ENCODE measurements at regions of chr4 and their contacts with region 1.

Region 1: GRCh38 chr4:121777625-121778024 is 12.7 kb upstream of the SMIM43 start:
- DNase-seq: no peak
- H3K4me3 ChIP-seq: no peak overlapping the region
- H3K27ac ChIP-seq: no peak overlapping the region
- H3K4me1 ChIP-seq: peaks cover 0 to 2% (median 0%) of the 10 kb centered on the region in 4 experiments; a peak in 1 of 7 replicates
- H3K27me3 ChIP-seq: peaks cover 0 to 2% (median 0%) of the 10 kb centered on the region in 4 experiments; a peak in 1 of 7 replicates
- CTCF ChIP-seq: no peak
- EP300 ChIP-seq: no peak
- POLR2A ChIP-seq: no peak
- RAD21 ChIP-seq: no peak

Region 2: DNA sequence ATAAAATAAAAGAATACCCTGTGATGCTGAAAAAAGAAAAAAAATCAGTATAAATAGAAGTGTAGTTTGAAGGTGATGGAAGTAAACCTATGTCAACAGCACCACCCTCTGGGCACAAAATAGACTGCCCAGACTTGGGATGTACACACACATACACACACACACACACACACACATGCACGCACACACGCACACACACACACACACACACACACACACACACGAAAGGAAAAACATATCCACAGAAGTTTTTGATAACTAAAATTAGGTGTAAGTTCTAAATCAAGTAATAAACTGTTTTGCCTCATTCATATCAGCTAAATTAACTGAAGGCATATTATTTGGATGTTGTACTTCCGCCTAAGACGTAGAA is 121.4 kb before region 1 on chr4:
- CTCF ChIA-PET with region 1: no interaction called
- POLR2A ChIA-PET with region 1: no interaction called
- DNase-seq: no peak
- H3K4me3 ChIP-seq: no peak overlapping the region
- H3K27ac ChIP-seq: no peak overlapping the region
- H3K4me1 ChIP-seq: no peaks in the 10 kb centered on the region
- H3K27me3 ChIP-seq: no peaks in the 10 kb centered on the region
- CTCF ChIP-seq: peak; percentile 15 to 58 (median 54); a peak in 3 of 4 replicates
- EP300 ChIP-seq: no peak
- POLR2A ChIP-seq: no peak
- RAD21 ChIP-seq: peak; percentile 71 to 73

Region 3: DNA sequence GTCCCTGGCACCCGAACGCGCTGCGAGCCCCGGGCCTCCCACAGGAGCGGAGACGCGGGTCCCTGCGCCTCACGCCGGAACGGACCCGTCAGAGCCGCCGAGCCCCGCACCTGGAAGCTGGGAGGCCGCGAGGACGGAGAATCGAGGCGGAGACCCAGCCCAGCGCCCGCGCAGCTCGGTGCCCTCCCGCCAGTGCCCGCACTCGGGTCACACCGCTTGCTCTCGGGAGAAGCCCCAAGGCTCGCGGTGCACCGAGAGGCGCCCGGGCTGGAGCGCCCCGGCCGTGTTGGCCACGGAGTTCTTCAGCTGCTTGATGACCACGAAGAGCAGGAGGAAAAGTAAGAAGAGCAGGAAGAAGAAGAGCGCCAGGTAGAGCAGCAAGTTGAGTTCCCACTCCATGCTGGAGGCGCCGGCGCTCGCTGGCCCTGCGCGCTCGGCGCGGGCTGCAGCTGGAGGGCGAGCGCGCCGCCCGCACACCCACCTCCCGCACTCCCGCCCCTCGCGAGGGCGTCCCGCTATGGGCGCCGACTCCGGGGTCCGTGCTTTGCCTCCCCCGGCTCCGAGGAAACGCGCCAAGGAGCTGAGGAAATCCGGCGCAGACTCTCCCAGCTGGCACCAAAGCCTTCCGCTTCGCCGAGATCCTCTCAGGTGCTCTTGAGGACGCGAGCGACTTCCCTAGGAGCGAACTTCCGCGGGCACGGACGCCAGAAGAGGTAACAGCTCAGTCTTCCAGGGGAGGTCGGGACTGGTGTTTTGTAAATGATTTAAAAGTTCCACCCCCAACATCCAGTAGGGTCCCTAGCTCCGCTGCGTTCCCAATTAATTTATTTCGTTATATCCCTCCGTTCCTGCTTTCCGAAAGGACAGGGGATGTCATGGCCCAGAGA is 12.7 kb before region 1 on chr4 and contains the start of gene SMIM43:
- CTCF ChIA-PET with region 1: interaction called, 10 read pairs
- POLR2A ChIA-PET with region 1: interaction called, 10 read pairs
- DNase-seq: peak in 1 of 2 experiments; percentile 76
- H3K4me3 ChIP-seq: peak within 1 kb of the TSS; percentile 47 to 76 (median 64)
- H3K27ac ChIP-seq: no peak within 1 kb of the TSS
- H3K4me1 ChIP-seq: peaks cover 0 to 11% (median 7%) of the 10 kb centered on the region in 4 experiments; a peak in 3 of 7 replicates
- H3K27me3 ChIP-seq: peaks cover 17 to 53% (median 38%) of the 10 kb centered on the region in 4 experiments
- CTCF ChIP-seq: no peak
- EP300 ChIP-seq: no peak
- POLR2A ChIP-seq: no peak
- RAD21 ChIP-seq: no peak
- total RNA-seq, gene SMIM43: 0.50 TPM in 1 of 2 replicates, not detected in the other

Measured in H1 (cell line).